CD8-positive, alpha-beta T cell (primary cell): ENCODE measurements at regions of chr16 and their contacts with region 1.

Region 1: DNA sequence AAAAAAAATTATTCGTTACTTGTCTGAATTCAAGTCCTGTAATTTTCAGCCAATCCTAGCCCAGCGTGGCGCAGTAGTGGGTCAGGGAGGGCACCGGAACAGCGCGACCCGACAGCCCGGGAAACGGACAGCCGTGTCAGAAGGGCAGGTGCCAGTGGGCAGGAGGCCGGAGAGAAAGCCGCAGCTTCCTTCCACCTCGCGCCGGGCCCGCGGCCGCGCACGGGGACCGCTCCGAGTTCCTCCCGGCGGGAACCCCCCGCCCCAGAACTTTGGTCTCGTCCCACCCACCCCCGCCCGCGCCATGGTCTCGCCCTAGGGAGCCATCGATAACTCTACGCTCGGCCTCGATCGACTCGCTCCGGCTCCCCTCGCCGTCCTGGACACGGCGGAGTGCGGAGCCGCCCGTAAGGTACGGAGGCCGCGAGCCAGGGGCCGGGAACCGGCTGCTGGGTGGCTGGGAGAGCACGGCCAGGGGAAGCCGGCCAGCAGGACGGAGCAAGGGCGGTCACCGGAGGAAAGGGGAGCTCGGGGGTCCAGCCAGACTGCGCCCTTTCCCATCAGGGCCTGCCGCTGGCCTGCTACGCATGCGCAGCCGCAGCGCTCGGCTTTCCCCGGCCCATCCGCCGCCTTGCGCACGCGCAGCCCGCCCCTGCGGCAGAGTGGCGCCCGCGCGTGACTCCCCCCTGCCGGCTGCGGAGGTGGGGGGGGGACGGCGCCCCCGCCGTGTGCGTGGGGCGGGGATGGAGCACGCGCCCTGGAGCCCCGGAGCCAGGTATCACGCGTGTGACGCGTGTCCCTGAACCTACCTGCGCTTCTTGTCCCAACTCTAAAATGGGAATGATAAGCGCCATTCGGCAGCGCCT is at the start of gene MLST8:
- DNase-seq: peak; percentile 81 to 97 (median 92)
- ATAC-seq: peak; percentile 92
- H3K4me3 ChIP-seq: peak within 1 kb of the TSS; percentile 83 to 94
- H3K4me3 Mint-ChIP-seq: peak within 1 kb of the TSS; percentile 87
- H3K27ac ChIP-seq: peak within 1 kb of the TSS; percentile 83 to 97
- H3K27ac Mint-ChIP-seq: peak within 1 kb of the TSS; percentile 91
- H3K4me1 ChIP-seq: peaks cover 15% of the 10 kb centered on the region
- H3K4me1 Mint-ChIP-seq: peaks cover 19% of the 10 kb centered on the region
- H3K27me3 ChIP-seq: no peaks in the 10 kb centered on the region
- H3K27me3 Mint-ChIP-seq: peaks cover 1% of the 10 kb centered on the region
- CTCF ChIP-seq: no peak
- total RNA-seq, gene MLST8: 29.9 to 30.8 TPM

Region 2: GRCh38 chr16:1772736-1773584 is 432.4 kb before region 1 on chr16 and contains the starts of genes EME2 and MRPS34:
- CTCF ChIA-PET with region 1: no interaction called
- POLR2A ChIA-PET with region 1: no interaction called
- intact Hi-C with region 1: loop called in 1 of 2 experiments (anchors 5 kb)
- DNase-seq: peak; percentile 54 to 89 (median 78)
- ATAC-seq: peak; percentile 48
- H3K4me3 ChIP-seq: peak within 1 kb of the TSS; percentile 79 to 91
- H3K4me3 Mint-ChIP-seq: peak within 1 kb of the TSS; percentile 96
- H3K27ac ChIP-seq: peak within 1 kb of the TSS; percentile 57 to 66
- H3K27ac Mint-ChIP-seq: peak within 1 kb of the TSS; percentile 96
- H3K4me1 ChIP-seq: peaks cover 30% of the 10 kb centered on the region
- H3K4me1 Mint-ChIP-seq: peaks cover 19% of the 10 kb centered on the region
- H3K27me3 ChIP-seq: no peaks in the 10 kb centered on the region
- H3K27me3 Mint-ChIP-seq: no peaks in the 10 kb centered on the region
- CTCF ChIP-seq: peak; percentile 92
- total RNA-seq, gene EME2: 27.5 to 31.7 TPM
- total RNA-seq, gene MRPS34: 18.9 to 21.4 TPM

Region 3: DNA sequence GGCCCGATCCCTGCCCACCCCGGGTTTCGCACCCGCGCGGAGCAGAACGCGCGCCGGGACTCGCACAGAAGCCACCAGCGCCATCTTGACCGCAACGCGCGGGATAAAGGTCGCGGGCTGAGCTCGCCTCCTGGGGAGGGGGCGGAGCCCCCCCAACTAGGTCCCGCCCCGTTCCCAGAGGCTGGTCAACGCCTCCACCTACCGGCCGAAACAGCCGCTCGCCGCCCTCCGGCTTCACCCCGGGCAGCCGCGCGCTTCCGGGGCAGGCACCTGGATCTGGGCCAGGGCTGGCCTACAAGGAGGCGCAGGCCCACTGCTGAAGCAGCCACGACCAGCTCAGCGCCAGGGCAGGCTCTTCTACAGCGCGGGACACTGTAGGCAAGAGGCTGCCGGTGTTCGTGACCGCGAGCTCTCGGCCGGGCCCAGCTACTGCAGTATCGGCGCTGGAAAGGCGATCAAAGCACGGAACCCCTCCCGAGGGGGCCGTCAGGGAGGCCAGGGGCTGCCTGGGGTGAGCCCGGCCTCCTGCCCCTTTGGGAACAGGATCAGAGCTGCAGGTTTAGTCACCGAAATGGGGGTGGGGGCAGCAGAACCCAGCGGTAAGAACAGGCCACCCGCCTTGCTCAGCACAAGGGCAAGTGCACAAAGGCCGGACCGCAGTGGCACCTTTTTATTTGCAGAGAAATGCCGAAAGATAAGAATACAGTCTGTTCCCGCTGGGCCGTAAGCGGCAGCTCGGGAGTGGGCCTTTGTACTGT is 46.3 kb after region 1 on chr16 and contains the start of gene ECI1:
- CTCF ChIA-PET with region 1: no interaction called
- POLR2A ChIA-PET with region 1: interaction called, 5 read pairs
- intact Hi-C with region 1: loop called (anchors 2 to 5 kb)
- DNase-seq: peak; percentile 50 to 89 (median 80)
- ATAC-seq: peak; percentile 70
- H3K4me3 ChIP-seq: peak within 1 kb of the TSS; percentile 57 to 64
- H3K4me3 Mint-ChIP-seq: peak within 1 kb of the TSS; percentile 85
- H3K27ac ChIP-seq: peak within 1 kb of the TSS; percentile 64 to 81
- H3K27ac Mint-ChIP-seq: peak within 1 kb of the TSS; percentile 90
- H3K4me1 ChIP-seq: peaks cover 8% of the 10 kb centered on the region
- H3K4me1 Mint-ChIP-seq: peaks cover 10% of the 10 kb centered on the region
- H3K27me3 ChIP-seq: no peaks in the 10 kb centered on the region
- H3K27me3 Mint-ChIP-seq: no peaks in the 10 kb centered on the region
- CTCF ChIP-seq: no peak
- total RNA-seq, gene ECI1: 10.6 to 11.0 TPM

Region 4: DNA sequence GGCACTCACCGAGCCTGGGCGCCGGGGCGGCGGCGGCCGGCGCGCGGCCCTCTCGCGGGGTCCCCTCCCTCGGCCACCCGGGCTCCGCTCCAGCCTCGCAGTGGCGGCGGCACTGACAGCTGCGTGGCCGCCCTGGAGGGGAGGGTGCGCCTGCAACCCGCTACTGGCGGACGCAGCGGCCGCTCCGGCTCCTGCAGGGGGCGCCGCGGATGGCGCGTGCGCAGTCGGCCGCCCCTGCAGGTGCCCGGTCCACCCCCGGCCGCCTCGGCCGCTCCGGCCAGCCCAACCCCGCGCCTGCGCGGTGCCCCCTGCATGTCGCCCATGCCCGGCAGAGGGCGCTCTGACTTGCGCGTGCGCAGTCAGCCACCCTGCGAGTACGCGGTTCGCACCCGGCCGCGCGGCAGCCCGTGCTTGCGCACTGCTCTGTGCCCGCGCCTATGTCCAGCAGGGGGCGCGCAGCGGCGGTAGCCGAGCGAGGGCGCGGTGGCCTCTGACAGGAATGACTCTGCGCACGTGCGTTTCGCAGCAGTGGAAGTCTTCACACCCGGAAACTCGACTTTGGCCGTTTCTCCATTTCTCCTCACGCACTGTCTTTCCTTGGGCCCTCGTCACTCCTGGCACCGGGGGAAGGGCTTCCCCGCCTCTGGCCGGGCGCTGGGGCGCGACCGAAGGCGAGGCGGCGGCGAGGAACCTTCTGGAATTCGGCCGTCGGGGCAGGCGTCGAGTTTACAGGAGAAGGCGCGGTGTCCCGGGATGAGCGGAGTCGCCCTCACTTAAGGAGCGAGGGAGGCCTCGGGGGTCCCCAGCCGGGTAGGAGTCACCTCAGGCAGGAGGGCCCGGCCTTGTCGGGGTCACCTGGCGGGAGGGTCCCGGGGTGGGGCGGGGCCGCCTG is 135.5 kb after region 1 on chr16 and contains the start of gene ABCA3:
- CTCF ChIA-PET with region 1: no interaction called
- POLR2A ChIA-PET with region 1: no interaction called
- intact Hi-C with region 1: loop called (anchors 5 kb)
- DNase-seq: peak; percentile 87 to 98 (median 93)
- ATAC-seq: peak; percentile 89
- H3K4me3 ChIP-seq: peak within 1 kb of the TSS; percentile 59 to 62
- H3K4me3 Mint-ChIP-seq: peak within 1 kb of the TSS; percentile 85
- H3K27ac ChIP-seq: no peak within 1 kb of the TSS
- H3K27ac Mint-ChIP-seq: peak within 1 kb of the TSS; percentile 71
- H3K4me1 ChIP-seq: peaks cover 9% of the 10 kb centered on the region
- H3K4me1 Mint-ChIP-seq: peaks cover 13% of the 10 kb centered on the region
- H3K27me3 ChIP-seq: peaks cover 0 to 3% of the 10 kb centered on the region in 2 experiments
- H3K27me3 Mint-ChIP-seq: peaks cover 5% of the 10 kb centered on the region
- CTCF ChIP-seq: peak; percentile 100
- total RNA-seq, gene ABCA3: 3.7 to 4.0 TPM

Region 5: GRCh38 chr16:2537453-2538379 is 332.4 kb after region 1 on chr16 and contains the start of gene PDPK1:
- CTCF ChIA-PET with region 1: no interaction called
- POLR2A ChIA-PET with region 1: no interaction called
- intact Hi-C with region 1: loop called in 1 of 2 experiments (anchors 2 kb)
- DNase-seq: peak; percentile 87 to 98 (median 94)
- ATAC-seq: peak; percentile 87
- H3K4me3 ChIP-seq: peak within 1 kb of the TSS; percentile 74 to 85
- H3K4me3 Mint-ChIP-seq: peak within 1 kb of the TSS; percentile 87
- H3K27ac ChIP-seq: peak within 1 kb of the TSS; percentile 63 to 75
- H3K27ac Mint-ChIP-seq: peak within 1 kb of the TSS; percentile 91
- H3K4me1 ChIP-seq: peaks cover 31% of the 10 kb centered on the region
- H3K4me1 Mint-ChIP-seq: peaks cover 43% of the 10 kb centered on the region
- H3K27me3 ChIP-seq: no peaks in the 10 kb centered on the region
- H3K27me3 Mint-ChIP-seq: no peaks in the 10 kb centered on the region
- CTCF ChIP-seq: no peak
- total RNA-seq, gene PDPK1: 42.3 to 49.2 TPM